ENCODE measurements at regions of chr17 and their contacts with region 1.

Region 1: DNA sequence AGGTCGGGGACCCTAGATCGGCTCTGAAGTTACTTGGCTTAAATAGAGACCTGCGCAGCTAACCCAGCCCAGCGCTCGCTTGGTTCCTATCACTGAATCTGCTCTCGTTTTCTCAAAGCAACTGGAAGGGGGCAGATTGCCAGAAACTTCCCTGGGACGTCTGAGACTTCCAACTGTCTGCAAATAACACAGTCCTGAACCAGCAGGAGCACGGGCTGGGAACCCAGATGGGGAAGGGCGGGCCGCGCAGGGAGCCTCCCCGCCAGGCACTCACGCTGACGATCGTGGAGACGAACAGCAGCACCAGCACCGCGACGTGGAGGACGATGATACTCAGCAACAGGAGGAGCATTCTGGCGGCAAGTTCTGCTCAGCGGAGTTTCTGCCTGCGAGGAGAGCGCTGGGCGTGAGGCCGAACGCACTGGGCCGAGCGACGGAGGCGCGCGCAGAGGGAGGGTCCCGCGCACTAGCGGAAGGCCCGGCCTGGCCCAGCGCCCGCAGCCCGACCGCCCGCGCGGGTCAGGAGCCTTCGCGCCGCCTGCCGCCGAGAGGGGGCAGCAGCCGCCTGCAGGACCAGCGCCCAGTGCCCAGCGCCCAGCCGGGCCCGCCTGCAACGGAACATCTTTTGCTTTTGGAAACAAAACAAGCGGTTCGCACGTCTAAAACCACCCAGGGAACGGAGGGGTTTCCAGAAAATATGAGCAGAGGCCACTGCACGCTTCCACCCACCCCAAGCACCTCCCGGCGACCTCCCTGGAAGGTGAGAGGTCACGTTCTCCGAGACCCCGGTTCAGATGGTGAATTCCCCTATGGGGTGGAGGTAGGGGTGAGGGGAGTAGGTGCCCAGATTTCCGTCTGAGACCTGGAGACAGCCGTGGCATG is 4.5 kb downstream of the PMP22 start:
- DNase-seq: peak; percentile 93
- ATAC-seq: peak; percentile 64

Region 2: DNA sequence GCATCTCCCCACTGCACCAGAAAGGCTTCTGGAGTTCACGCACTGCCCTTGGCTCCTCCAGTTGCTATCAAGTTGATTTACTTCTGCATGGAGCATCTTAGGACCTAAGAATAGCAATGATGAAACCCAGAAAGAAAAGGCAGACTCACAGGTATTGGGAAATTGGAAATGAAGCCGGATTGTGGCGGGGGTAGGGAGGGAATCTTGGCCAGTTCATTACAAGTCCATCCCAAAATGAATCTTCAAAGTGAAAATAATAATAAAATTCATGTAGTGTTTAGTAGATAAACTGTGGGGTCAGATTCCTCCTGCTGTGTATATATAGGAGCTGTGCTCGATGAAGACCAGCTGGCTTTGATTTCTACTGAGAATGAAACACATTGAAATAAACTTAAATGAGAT is 47.1 kb after region 1 on chr17:
- intact Hi-C with region 1: no loop called
- DNase-seq: no peak
- ATAC-seq: no peak

Region 3: GRCh38 chr17:15409721-15410250 is 149.2 kb after region 1 on chr17:
- intact Hi-C with region 1: loop called (anchors 10 kb)
- DNase-seq: no peak
- ATAC-seq: peak; percentile 86

Region 4: DNA sequence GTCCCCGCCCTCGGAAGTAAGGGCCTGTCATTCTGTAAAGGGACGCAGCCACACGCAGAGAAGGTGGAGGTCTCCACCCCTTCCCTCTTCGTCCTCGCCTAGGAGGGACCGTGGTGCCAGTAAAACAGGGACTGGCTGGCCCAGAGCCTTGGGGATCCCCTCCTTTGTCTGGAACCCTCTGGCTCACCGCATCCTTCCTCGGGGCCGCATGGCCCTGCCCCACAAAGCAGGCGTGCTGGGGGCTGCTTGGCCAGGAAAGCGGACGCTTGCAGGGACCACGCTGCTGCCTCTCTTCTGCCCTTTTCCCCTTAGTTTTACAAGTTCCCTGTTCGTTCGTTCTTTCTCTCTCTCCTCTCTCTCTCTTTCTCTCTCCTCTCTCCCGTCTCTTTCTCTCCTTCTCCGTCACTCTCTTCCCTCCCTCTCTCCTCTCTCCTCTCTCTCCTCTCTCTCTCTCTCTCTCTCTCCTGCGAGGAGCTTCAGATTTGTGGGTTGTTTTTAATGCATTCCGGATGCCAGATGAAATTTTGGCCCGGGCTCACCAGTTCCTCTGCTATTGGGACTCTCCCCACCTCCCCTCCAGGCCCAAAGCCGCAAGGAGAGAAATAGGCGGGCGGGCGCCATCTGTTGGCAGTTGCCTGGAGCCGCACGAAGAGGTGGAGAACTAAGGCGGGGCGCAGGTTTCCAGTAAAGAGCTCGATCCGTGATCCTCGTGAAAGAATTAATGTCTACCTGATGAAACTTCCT is 241.9 kb after region 1 on chr17:
- intact Hi-C with region 1: loop called (anchors 2 kb)
- DNase-seq: peak; percentile 97
- ATAC-seq: peak; percentile 97